Right ventricle myocardium inferior (tissue), 1 donor: ENCODE measurements at regions of chr1 and their contacts with region 1.

Region 1: DNA sequence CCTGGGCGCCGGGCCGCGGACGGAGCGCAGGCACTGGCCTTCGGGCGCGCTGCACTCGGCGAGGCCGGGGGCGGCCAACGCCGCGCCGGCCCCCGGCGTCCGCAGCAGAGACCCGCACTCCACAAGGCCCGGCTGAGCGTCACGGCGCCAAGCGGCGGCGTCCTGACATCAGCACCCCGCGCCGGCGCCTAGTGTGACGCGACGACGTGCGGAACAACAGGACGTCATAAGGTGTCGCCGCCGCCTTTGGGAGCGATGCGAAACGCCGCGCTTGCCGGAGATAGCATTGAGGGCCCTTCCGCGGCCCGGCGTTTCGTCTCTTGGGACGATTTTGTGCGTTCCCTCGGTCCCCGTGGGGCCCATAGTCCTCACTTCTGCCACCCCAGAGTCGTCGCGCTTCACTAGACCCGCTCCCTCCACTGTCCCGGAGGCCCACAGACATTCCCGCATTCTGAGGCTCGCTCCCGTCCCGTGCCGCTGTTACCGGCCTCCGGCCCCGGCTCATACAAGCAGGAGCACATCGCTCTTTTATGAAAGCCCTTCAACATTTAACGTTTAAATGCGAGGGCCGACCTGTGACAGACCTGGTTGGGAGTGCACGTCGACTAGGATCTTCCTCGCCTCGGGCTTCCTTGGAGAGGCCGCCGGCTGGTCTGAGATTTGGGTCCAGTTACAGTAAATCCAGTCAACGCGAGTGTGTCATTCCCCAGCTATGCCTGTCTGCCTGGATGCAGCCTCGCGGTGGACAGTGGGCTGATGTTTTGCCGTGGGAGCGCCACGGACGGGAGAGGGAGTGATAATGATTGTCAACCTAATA is at the start of gene SSU72:
- DNase-seq: peak; percentile 98
- ATAC-seq: peak; percentile 95
- total RNA-seq, gene SSU72: 116 TPM

Region 2: DNA sequence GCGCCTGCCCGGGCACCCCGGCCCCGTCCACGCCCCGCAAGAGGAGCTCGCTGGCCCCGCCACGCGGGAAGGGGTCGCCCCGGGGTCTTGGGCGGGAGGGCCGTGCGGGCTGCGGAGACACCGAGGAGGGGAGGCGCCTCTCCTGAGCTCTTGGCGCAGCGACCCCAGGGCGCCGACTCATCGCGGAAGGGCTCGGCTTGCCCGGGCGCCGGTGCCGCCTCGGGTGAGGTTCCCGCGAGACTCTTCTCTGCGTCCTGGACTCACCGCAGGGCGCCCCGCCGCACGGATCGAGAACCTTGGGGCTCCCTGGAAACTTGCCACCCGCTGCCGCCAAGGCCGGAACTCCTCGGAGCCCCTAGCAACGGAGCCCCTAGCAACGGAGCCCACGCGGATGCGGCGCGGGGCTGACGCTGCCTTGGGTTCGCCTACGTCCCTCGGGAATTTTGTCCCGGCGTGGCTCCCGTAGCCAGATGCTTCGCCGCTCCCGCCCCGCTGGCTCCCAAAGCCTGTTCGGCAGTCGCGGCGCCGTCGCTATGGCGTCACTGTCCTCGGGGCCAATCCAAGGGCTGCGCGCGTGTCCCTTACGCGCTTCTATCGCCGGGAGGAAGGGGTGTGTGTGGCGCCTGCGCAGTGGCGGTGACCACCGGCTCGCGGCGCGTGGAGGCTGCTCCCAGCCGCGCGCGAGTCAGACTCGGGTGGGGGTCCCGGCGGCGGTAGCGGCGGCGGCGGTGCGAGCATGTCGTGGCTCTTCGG is 63.2 kb before region 1 on chr1 and contains the start of gene ATAD3A:
- intact Hi-C with region 1: loop called (anchors 10 kb)
- DNase-seq: peak; percentile 100
- ATAC-seq: peak; percentile 97
- total RNA-seq, gene ATAD3A: 17.9 TPM

Region 3: GRCh38 chr1:1615256-1616044 is 40.5 kb after region 1 on chr1 and contains the start of gene MIB2:
- intact Hi-C with region 1: loop called (anchors 1 kb)
- DNase-seq: peak; percentile 98
- ATAC-seq: peak; percentile 95
- total RNA-seq, gene MIB2: 103 TPM

Region 4: GRCh38 chr1:1678581-1679390 is 103.9 kb after region 1 on chr1:
- intact Hi-C with region 1: no loop called
- DNase-seq: no peak
- ATAC-seq: no peak